ENCODE measurements at regions of chr5 and their contacts with region 1.

Region 1: DNA sequence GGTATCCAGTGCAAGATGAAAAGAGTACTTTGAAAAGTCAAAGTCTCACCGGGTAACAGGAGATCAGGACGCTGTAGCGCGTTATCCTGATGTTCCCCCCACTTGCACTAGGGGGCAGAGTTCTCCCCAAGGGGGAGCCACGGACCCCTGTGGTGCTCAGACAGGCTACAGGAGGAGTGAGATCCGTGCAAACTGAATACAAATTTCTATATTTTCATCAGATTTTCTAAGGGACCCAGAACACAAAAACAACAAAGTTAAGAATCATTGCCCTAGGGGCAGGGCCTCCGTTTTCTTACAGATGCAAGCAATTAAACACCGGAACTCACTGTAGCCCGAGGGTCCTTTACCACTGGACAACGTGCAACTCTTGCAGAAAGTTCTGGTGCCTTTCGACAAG is 2.0 kb downstream of the MYO10 start:
- DNase-seq: peak; percentile 25
- ATAC-seq: peak; percentile 81
- H3K4me3 ChIP-seq: no peak overlapping the region
- H3K27ac ChIP-seq: no peak overlapping the region
- H3K4me1 ChIP-seq: peaks cover 18% of the 10 kb centered on the region
- H3K27me3 ChIP-seq: peaks cover 3 to 37% of the 10 kb centered on the region in 2 experiments; a peak in 3 of 5 replicates
- CTCF ChIP-seq: peak; percentile 76
- EP300 ChIP-seq: no peak
- POLR2A ChIP-seq: no peak
- RAD21 ChIP-seq: 0 out of 2 replicates have a peak, but pooled peaks have one; percentile 36

Region 2: DNA sequence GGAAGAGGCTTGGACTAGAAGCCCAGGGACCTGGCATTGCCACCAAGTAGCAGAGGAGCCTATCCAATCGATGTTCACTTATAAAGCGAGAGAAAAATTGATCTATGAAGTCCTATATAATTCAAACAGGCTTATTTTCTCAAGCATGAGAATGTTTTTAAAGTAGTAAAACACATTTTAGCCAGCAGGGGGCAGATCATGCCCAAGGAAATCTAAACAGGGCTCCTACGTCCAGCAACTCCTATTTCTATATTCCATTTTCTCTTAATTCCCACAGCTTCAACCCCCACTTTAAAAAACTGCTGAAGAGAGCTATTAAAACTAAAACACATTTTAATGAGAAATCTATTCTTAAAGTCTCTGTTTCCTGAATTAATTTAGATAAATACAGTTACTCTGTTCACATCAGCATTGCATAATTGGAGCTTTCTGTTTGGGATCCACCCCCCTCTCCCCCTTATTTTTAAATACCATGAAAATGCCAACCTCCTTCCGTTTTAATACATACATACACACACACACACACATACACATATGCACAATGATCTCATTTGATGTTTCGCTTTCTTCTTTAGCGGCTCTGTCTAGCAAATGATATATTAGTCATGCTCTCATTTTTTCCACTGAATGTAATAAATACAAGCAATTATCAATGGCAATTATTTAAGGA is 143.0 kb before region 1 on chr5:
- CTCF ChIA-PET with region 1: no interaction called
- POLR2A ChIA-PET with region 1: no interaction called
- in situ Hi-C with region 1: no loop called
- intact Hi-C with region 1: loop called (anchors 5 kb)
- DNase-seq: peak; percentile 36
- ATAC-seq: peak; percentile 44; the same call in 1 of the 3 replicates
- H3K4me3 ChIP-seq: no peak overlapping the region
- H3K27ac ChIP-seq: no peak overlapping the region
- H3K4me1 ChIP-seq: peaks cover 11% of the 10 kb centered on the region
- H3K27me3 ChIP-seq: no peaks in the 10 kb centered on the region
- CTCF ChIP-seq: peak; percentile 61
- EP300 ChIP-seq: no peak
- POLR2A ChIP-seq: no peak
- RAD21 ChIP-seq: peak; percentile 56; the same call in 1 of the 2 replicates

Region 3: DNA sequence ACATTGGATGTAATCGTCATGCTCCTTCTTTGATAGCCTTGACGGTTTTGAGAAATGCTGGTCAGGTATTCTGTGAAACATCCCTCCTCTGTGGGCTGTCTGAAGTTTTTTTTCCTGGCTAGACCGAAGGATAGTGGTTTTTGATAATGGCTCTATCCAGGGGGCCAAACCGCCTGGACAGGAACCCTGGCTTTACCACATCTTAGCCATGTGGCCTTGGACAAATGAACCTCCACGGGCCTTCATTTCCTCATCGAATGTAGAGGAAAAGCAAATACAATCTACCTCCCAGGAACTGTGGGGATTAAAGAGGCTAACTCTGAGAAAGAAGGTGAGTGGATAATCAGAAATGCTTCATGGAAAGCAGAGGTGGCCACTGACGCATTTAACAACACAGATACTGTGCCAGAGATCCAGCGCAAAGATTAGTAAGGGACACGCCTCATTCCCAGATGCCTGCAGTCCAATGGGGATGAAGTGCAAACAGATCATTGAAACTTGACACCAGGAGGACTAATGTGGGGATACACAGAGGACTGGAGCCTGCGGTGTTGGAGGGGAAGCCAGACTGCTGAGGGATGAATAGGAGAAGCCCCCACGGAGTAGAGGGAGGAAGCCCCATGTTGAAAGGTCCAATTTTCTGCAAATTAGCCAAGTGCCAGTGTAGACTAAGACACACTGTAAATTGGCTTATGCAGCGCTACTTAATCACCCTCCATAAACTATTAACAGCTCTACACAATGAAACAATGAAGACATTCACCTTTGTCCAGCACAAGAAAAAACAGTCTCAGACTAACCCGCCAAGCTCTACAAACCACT is 39.7 kb before region 1 on chr5:
- CTCF ChIA-PET with region 1: no interaction called
- POLR2A ChIA-PET with region 1: no interaction called
- in situ Hi-C with region 1: no loop called
- intact Hi-C with region 1: no loop called
- DNase-seq: peak; percentile 75
- ATAC-seq: peak; percentile 99
- H3K4me3 ChIP-seq: no peak overlapping the region
- H3K27ac ChIP-seq: no peak overlapping the region
- H3K4me1 ChIP-seq: peaks cover 20% of the 10 kb centered on the region
- H3K27me3 ChIP-seq: peaks cover 0 to 5% of the 10 kb centered on the region in 2 experiments; a peak in 1 of 5 replicates
- CTCF ChIP-seq: no peak
- EP300 ChIP-seq: no peak
- POLR2A ChIP-seq: no peak
- RAD21 ChIP-seq: no peak

Region 4: GRCh38 chr5:17081142-17081541 is 147.0 kb after region 1 on chr5:
- CTCF ChIA-PET with region 1: no interaction called
- POLR2A ChIA-PET with region 1: no interaction called
- in situ Hi-C with region 1: no loop called
- intact Hi-C with region 1: no loop called
- DNase-seq: no peak
- ATAC-seq: no peak
- H3K4me3 ChIP-seq: no peak overlapping the region
- H3K27ac ChIP-seq: no peak overlapping the region
- H3K4me1 ChIP-seq: no peaks in the 10 kb centered on the region
- H3K27me3 ChIP-seq: no peaks in the 10 kb centered on the region
- CTCF ChIP-seq: no peak
- EP300 ChIP-seq: no peak
- POLR2A ChIP-seq: no peak
- RAD21 ChIP-seq: no peak

Region 5: GRCh38 chr5:17132444-17133083 is 198.4 kb after region 1 on chr5:
- CTCF ChIA-PET with region 1: no interaction called
- POLR2A ChIA-PET with region 1: no interaction called
- in situ Hi-C with region 1: no loop called
- intact Hi-C with region 1: loop called (anchors 1 kb)
- DNase-seq: no peak
- ATAC-seq: no peak
- H3K4me3 ChIP-seq: no peak overlapping the region
- H3K27ac ChIP-seq: no peak overlapping the region
- H3K4me1 ChIP-seq: no peaks in the 10 kb centered on the region
- H3K27me3 ChIP-seq: 0 out of 5 replicates have a peak, but pooled peaks cover 0 to 4% of the 10 kb centered on the region in 2 experiments
- CTCF ChIP-seq: peak; percentile 46
- EP300 ChIP-seq: no peak
- POLR2A ChIP-seq: no peak
- RAD21 ChIP-seq: no peak

Region 6: GRCh38 chr5:17189381-17190036 is 255.4 kb after region 1 on chr5:
- CTCF ChIA-PET with region 1: interaction called, 7 read pairs
- POLR2A ChIA-PET with region 1: no interaction called
- in situ Hi-C with region 1: loop called (anchors 10 kb)
- intact Hi-C with region 1: loop called (anchors 1 kb)
- DNase-seq: peak; percentile 65
- ATAC-seq: peak; percentile 90
- H3K4me3 ChIP-seq: no peak overlapping the region
- H3K27ac ChIP-seq: no peak overlapping the region
- H3K4me1 ChIP-seq: no peaks in the 10 kb centered on the region
- H3K27me3 ChIP-seq: peaks cover 0 to 4% of the 10 kb centered on the region in 2 experiments; a peak in 1 of 5 replicates
- CTCF ChIP-seq: peak; percentile 81
- EP300 ChIP-seq: no peak
- POLR2A ChIP-seq: no peak
- RAD21 ChIP-seq: no peak